T-cell (primary cell): ENCODE measurements at regions of chr2 and their contacts with region 1.

Region 1: DNA sequence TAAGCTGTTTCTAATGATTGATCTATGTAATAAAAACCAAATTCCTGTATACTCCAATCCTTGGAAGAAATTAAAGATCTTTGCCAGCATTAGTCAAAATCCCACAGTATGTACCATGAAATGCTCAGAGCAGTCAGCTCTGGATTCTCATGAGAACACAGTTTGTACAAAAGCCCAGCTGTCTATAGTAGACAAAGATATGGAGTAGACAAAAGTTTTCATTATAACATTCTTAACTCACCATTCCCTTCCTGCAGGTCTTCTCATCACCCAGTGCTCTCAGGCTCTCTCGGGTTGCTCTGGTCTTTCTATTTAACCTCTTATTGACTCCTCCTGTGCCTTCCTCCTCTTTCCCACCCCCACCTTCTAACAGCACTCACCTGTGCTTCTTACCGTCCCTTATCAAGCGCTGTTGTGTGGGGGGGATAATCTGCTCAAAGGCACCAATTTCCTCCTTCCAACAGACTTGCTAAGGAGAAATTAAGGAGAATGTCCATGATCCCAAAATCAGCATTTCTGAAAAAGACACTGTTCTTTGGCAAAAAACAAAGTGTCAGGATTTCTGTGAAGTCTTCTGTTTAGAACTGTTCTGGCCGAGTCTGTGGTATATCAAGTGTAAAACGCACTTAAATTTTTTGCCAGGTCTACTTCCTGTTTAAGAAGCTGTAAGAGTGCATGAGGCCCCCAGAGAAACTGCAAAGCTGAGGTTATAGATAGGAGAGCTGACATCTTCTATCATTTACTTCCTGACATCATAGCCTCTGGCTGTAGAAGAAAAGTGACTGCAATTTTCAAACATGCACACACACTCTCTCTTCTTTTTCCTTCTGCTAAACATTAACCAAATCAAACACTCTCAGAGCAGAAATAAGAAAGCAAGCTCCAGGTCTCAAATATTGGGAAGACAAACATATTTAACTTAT is 144.1 kb downstream of the EVA1A start:
- DNase-seq: peak in 17 of 35 experiments; percentile 4 to 53 (median 13)
- ATAC-seq: peak; percentile 76 to 95 (median 90)
- H3K4me3 ChIP-seq: peak overlapping the region; percentile 34 to 67
- H3K4me3 Mint-ChIP-seq: peak overlapping the region; percentile 74 to 89 (median 83)
- H3K27ac ChIP-seq: peak overlapping the region; percentile 22
- H3K27ac Mint-ChIP-seq: peak overlapping the region; percentile 81 to 88
- H3K4me1 ChIP-seq: peaks cover 0 to 13% of the 10 kb centered on the region in 2 experiments
- H3K4me1 Mint-ChIP-seq: peaks cover 18 to 48% (median 28%) of the 10 kb centered on the region in 3 donors
- H3K27me3 ChIP-seq: no peaks in the 10 kb centered on the region
- H3K27me3 Mint-ChIP-seq: peaks cover 0 to 13% of the 10 kb centered on the region in 2 donors

Region 2: DNA sequence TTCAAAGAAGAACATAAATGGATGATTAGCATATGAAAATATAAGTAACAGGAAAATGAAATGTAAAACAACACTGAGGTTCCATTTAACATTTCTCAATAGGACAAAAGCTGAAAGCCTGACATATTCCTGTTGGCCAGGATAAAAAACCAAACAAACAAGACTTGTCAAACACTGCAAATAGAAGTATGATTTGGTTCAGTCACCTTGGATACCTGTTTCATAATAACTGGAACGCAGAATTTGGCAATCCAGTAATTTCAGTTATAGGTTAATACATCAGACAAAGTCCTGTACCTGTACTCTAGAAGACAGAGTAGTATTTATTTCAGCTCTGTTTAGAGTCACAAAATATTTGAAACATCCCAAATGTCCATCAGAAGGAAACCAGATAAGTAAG is 160.6 kb after region 1 on chr2:
- CTCF ChIA-PET with region 1: interaction called in 1 of 2 experiments, 11 read pairs
- POLR2A ChIA-PET with region 1: no interaction called
- DNase-seq: no peak
- ATAC-seq: no peak
- H3K4me3 ChIP-seq: no peak overlapping the region
- H3K4me3 Mint-ChIP-seq: no peak overlapping the region
- H3K27ac ChIP-seq: no peak overlapping the region
- H3K27ac Mint-ChIP-seq: no peak overlapping the region
- H3K4me1 ChIP-seq: no peaks in the 10 kb centered on the region
- H3K4me1 Mint-ChIP-seq: no peaks in the 10 kb centered on the region
- H3K27me3 ChIP-seq: peaks cover 0 to 7% of the 10 kb centered on the region in 2 experiments
- H3K27me3 Mint-ChIP-seq: peaks cover 20 to 33% of the 10 kb centered on the region in 2 donors